H1 (cell line): ENCODE measurements at regions of chrX and their contacts with region 1.

Region 1: DNA sequence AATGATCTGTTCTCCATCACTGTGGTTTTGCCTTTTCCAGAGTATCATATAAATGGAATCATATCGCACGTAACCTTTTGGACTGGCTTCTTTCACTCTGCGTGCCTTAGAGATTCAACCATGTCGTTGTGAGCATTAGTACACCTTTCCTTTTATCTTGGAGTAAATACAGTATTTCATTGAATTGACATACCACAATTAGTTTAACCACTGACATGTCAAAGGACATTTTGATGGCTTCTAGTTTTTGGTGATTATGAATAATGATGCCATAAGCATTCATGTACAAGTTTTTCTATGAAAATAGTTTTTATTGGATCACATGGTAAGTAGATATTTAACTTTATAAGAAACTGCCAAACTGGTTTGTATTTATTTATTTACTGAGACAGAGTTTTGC is 35.2 kb downstream of the DDX3X start:
- DNase-seq: no peak
- H3K4me3 ChIP-seq: no peak overlapping the region
- H3K27ac ChIP-seq: no peak overlapping the region
- H3K4me1 ChIP-seq: no peaks in the 10 kb centered on the region
- H3K27me3 ChIP-seq: no peaks in the 10 kb centered on the region
- CTCF ChIP-seq: no peak
- EP300 ChIP-seq: no peak
- POLR2A ChIP-seq: no peak
- RAD21 ChIP-seq: no peak

Region 2: GRCh38 chrX:41350976-41351569 is 18.1 kb before region 1 on chrX:
- CTCF ChIA-PET with region 1: no interaction called
- POLR2A ChIA-PET with region 1: interaction called, 20 read pairs
- DNase-seq: no peak
- H3K4me3 ChIP-seq: no peak overlapping the region
- H3K27ac ChIP-seq: no peak overlapping the region
- H3K4me1 ChIP-seq: peaks cover 0 to 3% (median 0%) of the 10 kb centered on the region in 4 experiments; a peak in 2 of 7 replicates
- H3K27me3 ChIP-seq: no peaks in the 10 kb centered on the region
- CTCF ChIP-seq: no peak
- EP300 ChIP-seq: no peak
- POLR2A ChIP-seq: peak; percentile 39 to 80
- RAD21 ChIP-seq: no peak

Region 3: DNA sequence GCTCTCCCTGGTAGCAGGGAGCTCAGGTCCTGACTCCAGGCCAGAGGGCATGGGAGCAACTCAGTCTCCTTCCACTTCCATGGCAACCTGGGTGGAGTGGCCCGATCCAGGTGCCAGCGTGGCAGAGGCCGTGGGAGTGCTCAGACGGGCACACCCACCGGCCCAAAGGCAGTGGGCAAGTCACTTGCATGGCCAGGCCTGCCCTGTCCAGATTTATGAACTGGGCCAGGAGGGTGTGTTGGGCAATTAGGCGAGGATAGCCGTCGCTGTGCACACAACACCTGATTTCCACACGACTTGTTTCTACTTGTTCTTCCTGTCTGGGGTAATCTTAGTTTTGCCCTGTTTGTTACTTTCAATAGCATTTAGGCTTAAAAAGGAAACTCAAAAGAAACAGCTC is 22.5 kb after region 1 on chrX:
- CTCF ChIA-PET with region 1: no interaction called
- POLR2A ChIA-PET with region 1: no interaction called
- DNase-seq: no peak
- H3K4me3 ChIP-seq: no peak overlapping the region
- H3K27ac ChIP-seq: no peak overlapping the region
- H3K4me1 ChIP-seq: peaks cover 0 to 5% (median 1%) of the 10 kb centered on the region in 4 experiments; a peak in 2 of 7 replicates
- H3K27me3 ChIP-seq: no peaks in the 10 kb centered on the region
- CTCF ChIP-seq: no peak
- EP300 ChIP-seq: no peak
- POLR2A ChIP-seq: no peak
- RAD21 ChIP-seq: no peak

Region 4: GRCh38 chrX:41457613-41458192 is 88.6 kb after region 1 on chrX:
- CTCF ChIA-PET with region 1: no interaction called
- POLR2A ChIA-PET with region 1: no interaction called
- DNase-seq: peak in 1 of 2 experiments; percentile 65
- H3K4me3 ChIP-seq: no peak overlapping the region
- H3K27ac ChIP-seq: no peak overlapping the region
- H3K4me1 ChIP-seq: no peaks in the 10 kb centered on the region
- H3K27me3 ChIP-seq: no peaks in the 10 kb centered on the region
- CTCF ChIP-seq: peak; percentile 37 to 58 (median 55)
- EP300 ChIP-seq: no peak
- POLR2A ChIP-seq: no peak
- RAD21 ChIP-seq: peak; percentile 69 to 76